CD8-positive, alpha-beta T cell (primary cell): ENCODE measurements at regions of chr1 and their contacts with region 1.

Region 1: DNA sequence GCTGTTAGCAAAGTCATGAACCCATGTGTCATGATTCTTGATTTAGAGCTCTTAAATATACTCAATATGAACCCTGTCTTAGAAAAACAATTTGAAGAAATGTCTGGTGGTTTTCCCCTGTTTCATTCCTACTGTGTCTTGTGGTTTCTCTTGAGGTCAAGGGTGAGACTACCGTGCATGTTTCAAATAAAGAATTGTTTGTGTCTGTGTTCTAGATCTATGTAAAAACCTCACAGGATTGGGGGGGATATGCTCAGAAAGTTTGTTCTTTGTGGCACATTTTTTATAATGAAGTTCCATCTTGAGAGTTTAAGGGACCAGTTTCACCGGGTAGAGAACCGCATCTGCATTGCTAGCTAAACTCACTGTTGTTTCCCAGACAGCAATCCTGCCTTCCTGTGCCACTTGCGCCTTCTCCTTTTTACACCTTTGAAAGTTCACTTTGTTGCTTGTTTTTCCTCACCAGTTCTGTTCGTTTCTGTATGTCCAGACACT is 30.9 kb upstream of the CACYBP start:
- DNase-seq: peak in 6 of 9 experiments; percentile 27 to 92 (median 53)
- ATAC-seq: peak; percentile 48
- H3K4me3 ChIP-seq: peak overlapping the region; percentile 2 to 16
- H3K4me3 Mint-ChIP-seq: peak overlapping the region; percentile 77
- H3K27ac ChIP-seq: peak overlapping the region; percentile 59 to 89
- H3K27ac Mint-ChIP-seq: peak overlapping the region; percentile 98
- H3K4me1 ChIP-seq: peaks cover 73% of the 10 kb centered on the region
- H3K4me1 Mint-ChIP-seq: peaks cover 76% of the 10 kb centered on the region
- H3K27me3 ChIP-seq: no peaks in the 10 kb centered on the region
- H3K27me3 Mint-ChIP-seq: no peaks in the 10 kb centered on the region
- CTCF ChIP-seq: no peak

Region 2: GRCh38 chr1:174800216-174800851 is 168.5 kb before region 1 on chr1:
- CTCF ChIA-PET with region 1: interaction called, 6 read pairs
- POLR2A ChIA-PET with region 1: interaction called, 17 read pairs
- intact Hi-C with region 1: no loop called
- DNase-seq: peak in 4 of 9 experiments; percentile 6 to 37 (median 12)
- ATAC-seq: peak; percentile 3
- H3K4me3 ChIP-seq: peak overlapping the region; percentile 63 to 69
- H3K4me3 Mint-ChIP-seq: no peak overlapping the region
- H3K27ac ChIP-seq: peak overlapping the region; percentile 67 to 82
- H3K27ac Mint-ChIP-seq: no peak overlapping the region
- H3K4me1 ChIP-seq: peaks cover 15% of the 10 kb centered on the region
- H3K4me1 Mint-ChIP-seq: peaks cover 17% of the 10 kb centered on the region
- H3K27me3 ChIP-seq: no peaks in the 10 kb centered on the region
- H3K27me3 Mint-ChIP-seq: no peaks in the 10 kb centered on the region
- CTCF ChIP-seq: no peak

Region 3: GRCh38 chr1:174949061-174949460 is 19.7 kb before region 1 on chr1:
- CTCF ChIA-PET with region 1: interaction called, 7 read pairs
- POLR2A ChIA-PET with region 1: interaction called, 4 read pairs
- intact Hi-C with region 1: loop called in 1 of 2 experiments (anchors 2 kb)
- DNase-seq: no peak
- ATAC-seq: no peak
- H3K4me3 ChIP-seq: no peak overlapping the region
- H3K4me3 Mint-ChIP-seq: no peak overlapping the region
- H3K27ac ChIP-seq: no peak overlapping the region
- H3K27ac Mint-ChIP-seq: no peak overlapping the region
- H3K4me1 ChIP-seq: peaks cover 7% of the 10 kb centered on the region
- H3K4me1 Mint-ChIP-seq: peaks cover 13% of the 10 kb centered on the region
- H3K27me3 ChIP-seq: no peaks in the 10 kb centered on the region
- H3K27me3 Mint-ChIP-seq: no peaks in the 10 kb centered on the region
- CTCF ChIP-seq: no peak

Region 4: DNA sequence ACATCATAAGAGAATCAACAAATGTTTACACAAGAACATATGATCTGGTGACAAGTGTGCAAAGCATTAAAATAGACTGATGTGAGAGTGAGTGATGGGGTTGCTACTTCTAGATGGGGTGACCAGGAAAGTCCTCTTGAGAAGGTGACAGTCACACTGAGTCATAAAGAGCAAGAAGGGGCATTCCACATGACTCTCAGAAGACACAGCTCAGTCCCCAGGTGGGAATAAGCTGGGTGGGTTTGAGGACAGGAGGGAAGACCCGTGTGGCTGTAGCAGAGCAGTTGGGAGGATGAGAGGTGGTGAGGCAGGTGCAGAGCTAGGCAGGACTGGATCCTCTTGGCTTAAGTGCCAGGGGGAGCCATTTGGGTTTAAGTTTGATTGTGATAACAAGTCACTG is 721.5 kb after region 1 on chr1:
- CTCF ChIA-PET with region 1: no interaction called
- POLR2A ChIA-PET with region 1: no interaction called
- intact Hi-C with region 1: no loop called
- DNase-seq: no peak
- ATAC-seq: no peak
- H3K4me3 ChIP-seq: no peak overlapping the region
- H3K4me3 Mint-ChIP-seq: no peak overlapping the region
- H3K27ac ChIP-seq: no peak overlapping the region
- H3K27ac Mint-ChIP-seq: no peak overlapping the region
- H3K4me1 ChIP-seq: no peaks in the 10 kb centered on the region
- H3K4me1 Mint-ChIP-seq: no peaks in the 10 kb centered on the region
- H3K27me3 ChIP-seq: no peaks in the 10 kb centered on the region
- H3K27me3 Mint-ChIP-seq: peaks cover 22% of the 10 kb centered on the region
- CTCF ChIP-seq: no peak